ENCODE measurements at regions of chr1 and their contacts with region 1.

Region 1: DNA sequence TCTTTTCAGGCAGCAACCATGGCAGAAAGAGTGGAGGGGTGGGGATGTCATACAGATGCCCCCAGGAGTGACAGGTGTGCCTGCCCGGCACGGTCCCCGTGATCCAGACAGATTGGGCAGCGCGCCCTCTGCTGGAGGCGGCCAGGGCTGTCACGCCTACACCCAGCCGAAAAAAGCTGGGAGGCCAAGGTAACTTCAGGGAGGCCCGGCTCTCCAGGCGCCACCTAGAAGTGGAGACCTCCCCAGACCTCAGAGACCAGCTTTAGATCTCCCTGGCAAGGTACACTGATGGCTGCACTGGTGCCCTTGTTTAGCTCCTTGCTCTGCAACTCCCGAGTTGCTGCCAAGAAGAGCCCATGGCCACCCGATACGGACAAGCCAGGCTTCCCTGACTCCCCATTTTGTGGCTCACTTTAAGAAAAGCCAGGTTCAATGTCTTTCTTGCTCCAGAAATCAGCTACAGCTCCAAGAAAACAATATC is 6.6 kb downstream of the GOLT1A start:
- DNase-seq: peak; percentile 76
- H3K4me3 Mint-ChIP-seq: no peak overlapping the region
- H3K27ac Mint-ChIP-seq: no peak overlapping the region
- H3K4me1 Mint-ChIP-seq: no peaks in the 10 kb centered on the region
- H3K27me3 Mint-ChIP-seq: peaks cover 38% of the 10 kb centered on the region
- CTCF ChIP-seq: peak; percentile 99

Region 2: DNA sequence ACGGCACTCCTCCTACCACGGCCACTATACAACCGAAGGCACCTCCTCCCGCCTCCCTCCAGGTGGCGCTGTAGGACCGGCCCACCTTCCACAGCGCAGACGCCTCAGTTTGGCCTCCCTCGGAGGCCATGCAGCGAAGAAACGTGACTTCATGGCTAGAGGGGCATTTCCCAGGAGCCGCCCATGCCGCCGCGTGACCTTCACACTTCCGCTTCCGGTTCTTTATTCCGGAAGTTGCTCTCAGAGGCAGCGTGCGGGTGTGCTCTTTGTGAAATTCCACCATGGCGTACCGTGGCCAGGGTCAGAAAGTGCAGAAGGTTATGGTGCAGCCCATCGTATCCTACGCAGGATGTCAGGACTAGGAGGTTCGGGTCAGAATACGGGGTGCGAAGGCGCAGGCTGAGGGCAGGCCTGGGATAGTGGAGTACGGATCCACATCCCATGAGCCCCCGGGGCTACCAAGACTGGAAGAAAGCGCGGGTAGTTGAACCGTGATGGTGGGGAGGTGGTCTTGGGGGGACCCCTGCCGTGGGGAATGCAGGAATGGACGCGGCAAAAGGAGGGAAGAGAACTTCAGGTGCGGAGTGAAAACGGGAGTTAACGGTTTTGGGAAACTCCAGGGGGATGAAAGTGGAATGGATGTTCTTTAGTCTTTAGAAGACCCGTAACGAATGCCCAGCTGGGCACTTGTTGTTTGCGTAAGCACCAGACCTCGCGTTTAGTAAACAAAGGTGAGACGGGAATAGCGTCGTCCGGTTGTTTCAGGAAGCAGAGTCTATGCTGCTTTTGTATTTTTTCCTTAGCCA is 345.6 kb before region 1 on chr1 and contains the start of gene SNRPE:
- CTCF ChIA-PET with region 1: interaction called, 23 read pairs
- POLR2A ChIA-PET with region 1: interaction called, 4 read pairs
- intact Hi-C with region 1: loop called (anchors 1 kb)
- DNase-seq: peak; percentile 100
- H3K4me3 Mint-ChIP-seq: peak within 1 kb of the TSS; percentile 100
- H3K27ac Mint-ChIP-seq: peak within 1 kb of the TSS; percentile 100
- H3K4me1 Mint-ChIP-seq: peaks cover 43% of the 10 kb centered on the region
- H3K27me3 Mint-ChIP-seq: no peaks in the 10 kb centered on the region
- CTCF ChIP-seq: peak; percentile 100
- total RNA-seq, gene SNRPE: 358 and 423 TPM in 2 replicates

Region 3: DNA sequence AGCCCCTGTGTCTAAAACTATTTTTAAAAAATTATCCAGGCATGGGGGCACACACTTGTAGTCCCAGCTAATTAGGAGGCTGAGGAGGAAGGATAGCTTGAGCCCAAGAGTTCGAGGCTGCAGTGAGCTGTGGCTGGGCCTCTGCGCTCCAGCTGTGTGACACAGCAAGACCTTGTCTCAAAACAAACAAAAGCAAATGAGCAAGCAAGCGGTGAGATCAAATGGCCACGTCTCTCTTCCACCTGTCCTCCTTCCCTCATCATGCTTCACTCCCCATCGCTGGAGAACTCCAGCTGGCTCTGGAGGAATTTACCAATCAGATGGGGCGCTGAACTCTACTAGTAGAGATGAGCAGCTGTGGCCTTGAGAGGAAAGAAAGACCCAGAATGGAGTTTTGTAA is 27.0 kb before region 1 on chr1:
- CTCF ChIA-PET with region 1: interaction called, 52 read pairs
- POLR2A ChIA-PET with region 1: no interaction called
- intact Hi-C with region 1: no loop called
- DNase-seq: no peak
- H3K4me3 Mint-ChIP-seq: no peak overlapping the region
- H3K27ac Mint-ChIP-seq: no peak overlapping the region
- H3K4me1 Mint-ChIP-seq: no peaks in the 10 kb centered on the region
- H3K27me3 Mint-ChIP-seq: no peaks in the 10 kb centered on the region
- CTCF ChIP-seq: no peak

Region 4: DNA sequence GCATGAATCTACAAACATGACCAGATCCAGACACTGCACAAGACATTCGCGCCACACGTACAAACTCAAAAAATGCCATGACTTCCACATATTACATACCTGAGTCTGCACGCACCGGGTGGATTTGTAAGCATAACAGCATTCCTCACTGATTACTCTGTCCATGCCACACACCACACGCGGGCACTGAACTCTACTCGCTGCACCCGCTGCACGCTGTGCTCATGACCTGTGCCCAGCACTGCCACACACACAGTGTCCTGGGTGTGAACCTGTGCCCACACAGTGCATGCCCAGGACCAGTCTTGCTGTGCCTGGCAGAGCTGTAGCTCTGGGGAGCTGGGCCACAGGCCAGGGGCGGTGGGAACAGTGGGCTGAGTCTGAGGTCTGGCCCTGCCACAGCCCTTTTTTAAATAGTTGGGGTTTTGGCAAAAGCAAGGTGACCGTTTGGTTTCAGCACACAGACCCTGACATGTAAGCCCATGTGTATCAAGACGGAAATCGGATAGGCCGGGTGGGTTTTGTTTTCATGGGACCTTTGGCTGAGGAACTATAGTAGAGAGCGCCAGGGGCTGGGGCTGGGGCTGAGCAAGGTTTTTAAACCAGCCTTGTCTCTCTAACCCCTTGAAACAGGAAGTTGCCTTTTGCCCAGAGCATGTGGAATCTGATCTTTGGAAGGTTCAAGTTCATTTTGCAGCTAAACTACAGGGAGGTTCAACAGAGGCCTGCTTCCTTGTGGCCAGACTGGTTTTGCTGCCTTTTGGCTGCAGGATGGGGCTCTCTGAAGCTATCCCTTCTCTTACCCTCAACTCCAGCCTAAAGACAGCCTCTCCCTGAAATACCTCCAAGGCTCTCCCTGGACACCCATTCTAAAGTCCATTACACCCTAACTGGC is 18.9 kb after region 1 on chr1:
- CTCF ChIA-PET with region 1: interaction called, 60 read pairs
- POLR2A ChIA-PET with region 1: interaction called, 5 read pairs
- intact Hi-C with region 1: no loop called
- DNase-seq: peak; percentile 34
- H3K4me3 Mint-ChIP-seq: no peak overlapping the region
- H3K27ac Mint-ChIP-seq: peak overlapping the region; percentile 1
- H3K4me1 Mint-ChIP-seq: peaks cover 18% of the 10 kb centered on the region
- H3K27me3 Mint-ChIP-seq: no peaks in the 10 kb centered on the region
- CTCF ChIP-seq: no peak

Region 5: GRCh38 chr1:204257954-204258752 is 51.0 kb after region 1 on chr1:
- CTCF ChIA-PET with region 1: interaction called, 24 read pairs
- POLR2A ChIA-PET with region 1: interaction called, 3 read pairs
- intact Hi-C with region 1: no loop called
- DNase-seq: peak; percentile 80
- H3K4me3 Mint-ChIP-seq: no peak overlapping the region
- H3K27ac Mint-ChIP-seq: peak overlapping the region; percentile 49
- H3K4me1 Mint-ChIP-seq: peaks cover 13% of the 10 kb centered on the region
- H3K27me3 Mint-ChIP-seq: no peaks in the 10 kb centered on the region
- CTCF ChIP-seq: peak; percentile 97

Region 6: DNA sequence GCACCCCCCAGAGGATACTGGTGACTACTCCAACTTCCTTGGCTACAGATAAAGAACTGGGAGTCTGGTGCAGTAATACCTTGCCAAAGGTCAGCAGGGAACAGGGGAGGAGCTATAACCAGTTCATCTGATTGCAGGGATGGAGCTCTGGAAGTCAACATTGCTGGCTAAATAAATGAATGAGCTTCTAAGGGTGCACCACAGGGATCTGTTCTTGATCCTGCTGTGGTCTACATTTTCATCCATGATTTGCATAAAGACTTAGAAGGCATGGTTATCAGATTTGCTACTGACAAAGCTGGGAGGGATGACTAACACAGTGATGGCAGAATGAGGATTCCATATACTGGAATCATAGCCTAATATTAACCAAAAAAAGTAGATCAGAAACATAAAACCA is 134.2 kb after region 1 on chr1:
- CTCF ChIA-PET with region 1: interaction called, 25 read pairs
- POLR2A ChIA-PET with region 1: interaction called, 3 read pairs
- intact Hi-C with region 1: no loop called
- DNase-seq: no peak
- H3K4me3 Mint-ChIP-seq: no peak overlapping the region
- H3K27ac Mint-ChIP-seq: no peak overlapping the region
- H3K4me1 Mint-ChIP-seq: peaks cover 12% of the 10 kb centered on the region
- H3K27me3 Mint-ChIP-seq: no peaks in the 10 kb centered on the region
- CTCF ChIP-seq: no peak

Region 7: DNA sequence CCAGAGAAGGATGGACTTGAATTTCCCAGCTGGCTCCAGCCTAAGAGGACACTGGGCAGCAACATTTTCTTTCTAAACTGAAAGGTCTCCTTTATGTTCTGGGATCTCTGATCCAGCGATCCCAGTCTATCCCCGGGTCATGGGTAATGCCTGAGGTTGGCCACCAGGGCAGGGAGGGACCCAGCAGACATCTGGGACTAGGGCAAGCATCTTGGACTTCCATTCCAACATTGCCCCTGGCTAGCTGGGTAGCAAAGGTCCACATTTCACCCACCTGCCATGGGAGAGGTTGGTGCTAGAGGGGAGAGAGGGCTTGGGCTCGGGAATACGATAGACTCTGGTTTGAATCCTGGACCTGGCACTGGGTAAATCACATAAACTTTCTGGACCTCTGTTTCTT is 393.8 kb after region 1 on chr1:
- CTCF ChIA-PET with region 1: no interaction called
- POLR2A ChIA-PET with region 1: no interaction called
- intact Hi-C with region 1: no loop called
- DNase-seq: peak; percentile 20
- H3K4me3 Mint-ChIP-seq: no peak overlapping the region
- H3K27ac Mint-ChIP-seq: no peak overlapping the region
- H3K4me1 Mint-ChIP-seq: no peaks in the 10 kb centered on the region
- H3K27me3 Mint-ChIP-seq: peaks cover 38% of the 10 kb centered on the region
- CTCF ChIP-seq: peak; percentile 30